Mammary epithelial cell (primary cell): ENCODE measurements at regions of chr12 and their contacts with region 1.

Region 1: DNA sequence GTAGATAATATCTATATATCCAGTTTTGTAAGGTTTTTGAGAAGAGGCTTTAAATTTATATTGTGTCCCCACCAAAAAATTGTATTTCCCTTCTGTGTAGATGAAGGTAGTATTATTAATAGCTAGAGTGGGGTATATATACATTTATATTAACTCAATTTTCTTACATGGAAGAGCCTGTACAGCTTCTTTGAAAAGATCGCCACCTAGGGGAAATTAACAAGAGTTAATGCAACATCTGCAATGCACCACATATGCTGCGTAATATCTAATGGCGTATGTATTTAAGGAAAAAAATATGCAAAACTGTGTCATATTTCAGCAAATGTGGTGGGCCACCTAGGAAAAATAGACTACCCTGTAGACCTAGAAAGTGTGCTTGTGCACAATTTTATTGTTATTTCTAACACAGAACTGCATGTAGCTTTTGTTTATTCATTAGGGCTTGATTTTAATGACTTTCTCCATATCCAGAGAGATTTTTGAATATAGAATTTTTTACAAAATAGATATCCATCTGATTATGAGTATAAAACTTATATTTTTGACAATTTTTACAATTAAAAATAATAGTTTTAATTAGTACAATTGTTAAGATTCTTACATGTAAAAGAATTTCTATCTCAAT is 14.0 kb downstream of the CCER1 start:
- DNase-seq: peak; percentile 32
- H3K4me3 ChIP-seq: no peak overlapping the region
- H3K27ac ChIP-seq: no peak overlapping the region
- H3K4me1 ChIP-seq: peaks cover 9% of the 10 kb centered on the region
- H3K27me3 ChIP-seq: no peaks in the 10 kb centered on the region
- CTCF ChIP-seq: peak; percentile 61 to 78

Region 2: DNA sequence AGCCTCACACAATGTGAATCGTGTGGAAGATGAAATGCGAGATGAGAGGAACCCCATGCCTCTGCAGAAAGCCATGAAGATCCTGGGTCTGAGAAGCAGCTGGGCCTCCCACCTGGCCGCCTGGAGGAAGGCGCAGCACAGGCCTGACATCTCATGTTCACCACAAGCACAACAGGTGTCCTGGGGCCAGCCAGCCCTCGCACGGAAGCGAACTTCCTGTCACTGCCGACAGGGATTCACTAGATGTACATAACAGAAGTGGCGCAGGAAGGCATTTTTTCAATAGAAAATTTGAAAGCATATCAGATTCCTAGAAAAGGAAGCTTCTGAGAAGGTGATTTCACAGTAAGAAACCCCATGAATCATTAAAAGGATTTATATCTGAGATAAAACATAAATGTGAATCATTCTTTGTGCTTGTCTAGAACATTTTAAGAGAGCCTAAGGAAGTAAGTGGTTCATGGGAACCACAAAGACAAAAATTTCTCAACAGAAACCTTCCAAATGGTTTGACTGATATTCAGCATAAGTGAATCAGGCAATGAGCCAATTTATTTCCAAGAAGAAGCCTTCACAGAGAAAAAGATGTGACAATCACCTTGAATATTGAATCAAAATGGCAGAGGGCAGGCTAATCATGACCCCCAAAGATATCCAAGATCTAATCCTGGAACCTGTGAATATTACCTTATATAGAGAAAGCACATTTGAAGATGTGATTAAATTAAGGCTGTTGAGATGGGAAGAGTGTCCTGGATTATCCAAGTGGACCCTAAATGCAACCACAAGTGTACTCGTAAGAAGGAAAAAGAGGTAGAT is 1900.6 kb before region 1 on chr12:
- CTCF ChIA-PET with region 1: no interaction called
- dilution Hi-C with region 1: no loop called
- in situ Hi-C with region 1: loop called in 1 of 2 experiments (anchors 25 kb)
- intact Hi-C with region 1: no loop called
- DNase-seq: peak; percentile 78
- H3K4me3 ChIP-seq: no peak overlapping the region
- H3K27ac ChIP-seq: no peak overlapping the region
- H3K4me1 ChIP-seq: no peaks in the 10 kb centered on the region
- H3K27me3 ChIP-seq: no peaks in the 10 kb centered on the region
- CTCF ChIP-seq: no peak

Region 3: GRCh38 chr12:90013409-90013808 is 927.6 kb before region 1 on chr12:
- CTCF ChIA-PET with region 1: no interaction called
- dilution Hi-C with region 1: no loop called
- in situ Hi-C with region 1: loop called in 1 of 2 experiments (anchors 25 kb)
- intact Hi-C with region 1: no loop called
- DNase-seq: no peak
- H3K4me3 ChIP-seq: no peak overlapping the region
- H3K27ac ChIP-seq: no peak overlapping the region
- H3K4me1 ChIP-seq: peaks cover 10% of the 10 kb centered on the region
- H3K27me3 ChIP-seq: no peaks in the 10 kb centered on the region
- CTCF ChIP-seq: peak in 1 of 2 donors; percentile 29

Region 4: DNA sequence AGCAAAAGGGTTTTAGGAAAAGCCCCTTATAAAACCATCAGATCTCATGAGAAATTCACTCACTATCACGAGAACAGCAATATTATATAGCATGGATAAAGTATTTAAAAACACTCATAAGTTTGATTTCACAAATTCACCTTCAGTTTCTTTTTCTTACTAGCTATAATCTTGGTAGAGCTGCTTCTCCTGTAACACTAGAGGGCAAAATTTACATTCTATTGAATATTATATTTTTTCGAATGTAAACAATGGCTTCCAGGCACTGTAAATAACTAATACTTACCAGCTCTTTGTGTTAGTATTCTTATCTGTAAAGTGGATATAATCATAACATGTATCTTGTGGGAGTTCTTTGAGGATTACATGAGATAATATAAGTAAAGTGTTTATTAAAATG is 245.6 kb before region 1 on chr12:
- CTCF ChIA-PET with region 1: interaction called, 3 read pairs
- dilution Hi-C with region 1: no loop called
- in situ Hi-C with region 1: no loop called
- intact Hi-C with region 1: loop called (anchors 1 kb)
- DNase-seq: no peak
- H3K4me3 ChIP-seq: no peak overlapping the region
- H3K27ac ChIP-seq: no peak overlapping the region
- H3K4me1 ChIP-seq: no peaks in the 10 kb centered on the region
- H3K27me3 ChIP-seq: no peaks in the 10 kb centered on the region
- CTCF ChIP-seq: peak; percentile 27 to 50

Region 5: GRCh38 chr12:90959538-90960139 is 18.7 kb after region 1 on chr12:
- CTCF ChIA-PET with region 1: interaction called, 6 read pairs
- dilution Hi-C with region 1: no loop called
- in situ Hi-C with region 1: no loop called
- intact Hi-C with region 1: loop called (anchors 1 kb)
- DNase-seq: peak; percentile 20
- H3K4me3 ChIP-seq: no peak overlapping the region
- H3K27ac ChIP-seq: no peak overlapping the region
- H3K4me1 ChIP-seq: no peaks in the 10 kb centered on the region
- H3K27me3 ChIP-seq: peaks cover 3% of the 10 kb centered on the region
- CTCF ChIP-seq: peak; percentile 67 to 75

Region 6: DNA sequence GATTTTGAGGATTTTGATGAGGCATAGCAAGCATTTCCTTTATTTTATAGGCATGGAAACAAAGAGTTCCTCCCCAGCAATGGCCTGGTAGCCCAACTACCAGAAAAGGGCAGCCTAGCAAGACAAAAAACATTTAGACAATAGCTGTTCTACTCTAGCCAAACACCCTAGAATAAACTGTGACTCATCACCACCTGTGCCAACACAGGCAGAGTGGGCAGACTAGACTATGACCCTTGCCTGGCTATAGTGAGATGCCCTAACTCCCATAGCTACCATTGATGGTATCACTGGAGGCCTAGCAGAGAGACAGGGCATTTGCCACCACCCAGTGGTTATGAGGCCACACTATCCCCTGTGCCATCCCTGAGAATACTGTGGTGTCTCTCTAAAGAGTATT is 29.5 kb after region 1 on chr12:
- CTCF ChIA-PET with region 1: no interaction called
- dilution Hi-C with region 1: no loop called
- in situ Hi-C with region 1: no loop called
- intact Hi-C with region 1: no loop called
- DNase-seq: peak; percentile 12
- H3K4me3 ChIP-seq: no peak overlapping the region
- H3K27ac ChIP-seq: no peak overlapping the region
- H3K4me1 ChIP-seq: peaks cover 8% of the 10 kb centered on the region
- H3K27me3 ChIP-seq: no peaks in the 10 kb centered on the region
- CTCF ChIP-seq: no peak